CD4-positive, alpha-beta T cell (primary cell): ENCODE measurements at regions of chr2 and their contacts with region 1.

Region 1: DNA sequence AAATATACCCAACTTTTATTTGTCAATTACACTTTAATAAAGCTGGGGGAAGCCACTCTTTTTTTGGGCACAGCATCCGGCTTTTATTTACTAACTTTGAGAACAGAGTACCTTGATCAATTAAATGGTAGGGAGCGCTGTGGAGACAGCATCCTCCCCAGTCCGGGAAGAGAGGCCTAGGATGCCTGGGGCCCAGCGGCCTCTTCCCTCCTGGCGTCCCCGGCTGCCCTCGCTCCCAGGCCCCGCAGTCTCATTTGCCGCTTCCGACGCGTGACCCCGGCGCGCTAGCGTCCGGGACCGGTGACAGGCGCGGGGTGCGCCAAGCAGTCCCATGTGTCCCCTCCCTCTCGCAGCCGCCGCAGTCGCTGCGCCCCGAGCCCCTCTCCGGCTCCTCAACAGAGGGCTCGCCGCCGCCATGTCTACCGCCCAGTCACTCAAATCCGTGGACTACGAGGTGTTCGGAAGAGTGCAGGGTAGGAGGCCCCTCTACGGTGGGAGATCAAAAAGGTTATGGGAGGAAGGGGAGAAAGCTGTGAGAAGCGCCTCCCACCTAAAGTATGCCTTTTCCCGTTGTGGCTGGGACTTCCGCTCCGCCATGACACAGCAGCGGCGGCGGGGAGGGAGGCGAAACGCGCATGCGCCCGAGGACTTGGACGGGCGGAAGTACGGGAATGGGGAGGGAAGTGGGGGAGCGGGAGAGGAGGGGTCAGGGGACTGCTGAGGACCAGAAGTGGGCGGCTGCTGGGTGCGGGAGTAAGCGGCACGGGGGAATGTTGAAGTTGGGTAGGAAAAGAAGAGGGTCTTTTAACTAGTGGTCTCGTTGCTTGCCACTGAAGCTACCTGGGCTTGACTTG is at the start of gene ACYP2:
- DNase-seq: peak; percentile 79 to 96 (median 90)
- ATAC-seq: peak; percentile 78
- H3K4me3 ChIP-seq: peak within 1 kb of the TSS; percentile 86
- H3K4me3 Mint-ChIP-seq: peak within 1 kb of the TSS; percentile 92
- H3K27ac ChIP-seq: peak within 1 kb of the TSS; percentile 96 to 98
- H3K27ac Mint-ChIP-seq: peak within 1 kb of the TSS; percentile 99
- H3K4me1 ChIP-seq: peaks cover 11% of the 10 kb centered on the region
- H3K4me1 Mint-ChIP-seq: peaks cover 16% of the 10 kb centered on the region
- H3K27me3 ChIP-seq: no peaks in the 10 kb centered on the region
- H3K27me3 Mint-ChIP-seq: no peaks in the 10 kb centered on the region
- CTCF ChIP-seq: peak; percentile 17
- total RNA-seq, gene ACYP2: 9.3 to 10.9 TPM

Region 2: GRCh38 chr2:53767405-53768241 is 347.9 kb before region 1 on chr2 and contains the start of gene CHAC2:
- CTCF ChIA-PET with region 1: no interaction called
- POLR2A ChIA-PET with region 1: interaction called, 8 read pairs
- intact Hi-C with region 1: loop called in 1 of 2 experiments (anchors 10 kb)
- DNase-seq: peak; percentile 68 to 93 (median 78)
- ATAC-seq: peak; percentile 88
- H3K4me3 ChIP-seq: peak within 1 kb of the TSS; percentile 77
- H3K4me3 Mint-ChIP-seq: peak within 1 kb of the TSS; percentile 95
- H3K27ac ChIP-seq: peak within 1 kb of the TSS; percentile 75 to 83
- H3K27ac Mint-ChIP-seq: peak within 1 kb of the TSS; percentile 91
- H3K4me1 ChIP-seq: peaks cover 13% of the 10 kb centered on the region
- H3K4me1 Mint-ChIP-seq: peaks cover 41% of the 10 kb centered on the region
- H3K27me3 ChIP-seq: no peaks in the 10 kb centered on the region
- H3K27me3 Mint-ChIP-seq: no peaks in the 10 kb centered on the region
- CTCF ChIP-seq: peak; percentile 59
- total RNA-seq, gene CHAC2: 0.47 to 0.85 TPM

Region 3: GRCh38 chr2:54330162-54330925 is 214.8 kb after region 1 on chr2:
- CTCF ChIA-PET with region 1: no interaction called
- POLR2A ChIA-PET with region 1: no interaction called
- intact Hi-C with region 1: loop called in 1 of 2 experiments (anchors 5 kb)
- DNase-seq: peak; percentile 64 to 95 (median 82)
- ATAC-seq: peak; percentile 97
- H3K4me3 ChIP-seq: peak overlapping the region; percentile 61
- H3K4me3 Mint-ChIP-seq: peak overlapping the region; percentile 93
- H3K27ac ChIP-seq: no peak overlapping the region
- H3K27ac Mint-ChIP-seq: peak overlapping the region; percentile 43
- H3K4me1 ChIP-seq: peaks cover 14% of the 10 kb centered on the region
- H3K4me1 Mint-ChIP-seq: peaks cover 11% of the 10 kb centered on the region
- H3K27me3 ChIP-seq: no peaks in the 10 kb centered on the region
- H3K27me3 Mint-ChIP-seq: peaks cover 20% of the 10 kb centered on the region
- CTCF ChIP-seq: no peak